Panc1 (cell line): ENCODE measurements at regions of chrX and their contacts with region 1.

Region 1: DNA sequence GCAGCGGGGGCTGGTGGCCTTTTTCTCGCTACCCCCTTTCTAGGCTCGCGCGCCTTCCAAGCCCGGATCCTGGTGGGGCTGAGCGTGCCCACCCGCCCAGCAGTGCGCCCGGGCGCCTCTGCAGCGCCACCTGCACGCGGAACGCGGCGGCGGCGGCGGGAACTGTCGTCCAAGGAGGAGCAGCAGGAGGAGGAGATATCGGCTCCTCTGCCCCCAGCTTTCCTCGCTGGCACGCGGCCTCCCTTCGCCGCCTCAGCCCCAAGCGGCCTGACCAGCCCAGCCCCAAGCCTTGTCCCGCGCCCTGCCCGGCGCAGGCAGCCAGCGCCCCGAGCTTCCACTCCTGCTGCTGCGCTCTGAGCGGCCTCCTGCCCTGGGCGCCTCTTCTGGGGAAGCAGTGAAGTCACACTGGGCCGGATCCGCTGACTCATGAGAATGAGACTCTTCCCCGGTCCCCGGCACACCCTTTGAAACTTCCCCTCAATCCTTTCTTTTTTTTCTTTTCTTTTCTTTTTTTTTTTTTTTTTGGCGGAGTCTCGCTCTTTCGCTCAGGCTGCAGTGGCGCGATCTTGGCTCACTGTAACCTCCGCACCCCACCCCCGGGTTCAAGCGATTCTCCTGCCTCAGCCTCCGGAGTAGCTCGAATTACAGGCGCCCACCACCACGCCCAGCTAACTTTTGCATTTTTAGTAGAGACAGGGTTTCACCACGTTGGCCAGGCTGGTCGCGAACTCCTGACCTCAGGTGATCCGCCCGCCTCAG is 10.6 kb upstream of the ELF4 start:
- DNase-seq: no peak
- ATAC-seq: peak; percentile 84
- H3K4me3 ChIP-seq: peak overlapping the region; percentile 39 to 51
- H3K27ac ChIP-seq: peak overlapping the region; percentile 90
- H3K4me1 ChIP-seq: peaks cover 42% of the 10 kb centered on the region
- H3K27me3 ChIP-seq: no peaks in the 10 kb centered on the region
- CTCF ChIP-seq: no peak

Region 2: GRCh38 chrX:129998021-129998420 is 122.9 kb before region 1 on chrX:
- CTCF ChIA-PET with region 1: no interaction called
- POLR2A ChIA-PET with region 1: no interaction called
- in situ Hi-C with region 1: no loop called
- intact Hi-C with region 1: no loop called
- DNase-seq: no peak
- ATAC-seq: no peak
- H3K4me3 ChIP-seq: no peak overlapping the region
- H3K27ac ChIP-seq: no peak overlapping the region
- H3K4me1 ChIP-seq: no peaks in the 10 kb centered on the region
- H3K27me3 ChIP-seq: no peaks in the 10 kb centered on the region
- CTCF ChIP-seq: no peak

Region 3: GRCh38 chrX:130019312-130019711 is 101.6 kb before region 1 on chrX:
- CTCF ChIA-PET with region 1: no interaction called
- POLR2A ChIA-PET with region 1: no interaction called
- in situ Hi-C with region 1: no loop called
- intact Hi-C with region 1: no loop called
- DNase-seq: no peak
- ATAC-seq: no peak
- H3K4me3 ChIP-seq: no peak overlapping the region
- H3K27ac ChIP-seq: no peak overlapping the region
- H3K4me1 ChIP-seq: no peaks in the 10 kb centered on the region
- H3K27me3 ChIP-seq: no peaks in the 10 kb centered on the region
- CTCF ChIP-seq: no peak

Region 4: DNA sequence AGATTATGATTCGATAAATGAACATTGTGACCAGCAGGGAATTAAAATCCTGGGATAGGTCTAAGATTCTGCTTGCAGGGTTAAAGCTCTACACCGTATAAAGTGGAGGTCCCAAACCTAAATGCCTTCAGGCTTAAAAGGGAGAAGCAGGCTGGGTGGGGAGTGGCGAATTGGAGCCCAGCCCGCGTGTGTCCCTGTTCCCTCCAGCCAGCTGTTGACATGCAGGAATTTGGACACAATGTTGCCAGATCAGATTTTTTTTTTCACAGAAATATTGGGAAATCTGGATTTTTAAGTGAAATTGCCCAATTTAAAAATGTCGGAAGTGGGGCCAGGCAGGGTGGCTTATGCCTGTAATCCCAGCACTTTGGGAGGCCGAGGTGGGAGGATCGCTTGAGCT is 71.1 kb before region 1 on chrX:
- CTCF ChIA-PET with region 1: no interaction called
- POLR2A ChIA-PET with region 1: no interaction called
- in situ Hi-C with region 1: no loop called
- intact Hi-C with region 1: no loop called
- DNase-seq: no peak
- ATAC-seq: no peak
- H3K4me3 ChIP-seq: no peak overlapping the region
- H3K27ac ChIP-seq: no peak overlapping the region
- H3K4me1 ChIP-seq: no peaks in the 10 kb centered on the region
- H3K27me3 ChIP-seq: no peaks in the 10 kb centered on the region
- CTCF ChIP-seq: no peak

Region 5: GRCh38 chrX:130079824-130080406 is 41.0 kb before region 1 on chrX:
- CTCF ChIA-PET with region 1: interaction called, 7 read pairs
- POLR2A ChIA-PET with region 1: no interaction called
- in situ Hi-C with region 1: no loop called
- intact Hi-C with region 1: loop called (anchors 1 kb)
- DNase-seq: peak; percentile 54
- ATAC-seq: peak; percentile 82
- H3K4me3 ChIP-seq: no peak overlapping the region
- H3K27ac ChIP-seq: no peak overlapping the region
- H3K4me1 ChIP-seq: peaks cover 26% of the 10 kb centered on the region
- H3K27me3 ChIP-seq: no peaks in the 10 kb centered on the region
- CTCF ChIP-seq: no peak

Region 6: GRCh38 chrX:130097507-130098209 is 23.3 kb before region 1 on chrX:
- CTCF ChIA-PET with region 1: interaction called, 3 read pairs
- POLR2A ChIA-PET with region 1: interaction called, 12 read pairs
- in situ Hi-C with region 1: no loop called
- intact Hi-C with region 1: no loop called
- DNase-seq: no peak
- ATAC-seq: peak; percentile 61
- H3K4me3 ChIP-seq: no peak overlapping the region
- H3K27ac ChIP-seq: no peak overlapping the region
- H3K4me1 ChIP-seq: peaks cover 8% of the 10 kb centered on the region
- H3K27me3 ChIP-seq: no peaks in the 10 kb centered on the region
- CTCF ChIP-seq: no peak

Region 7: GRCh38 chrX:130165703-130166502 is 45.0 kb after region 1 on chrX and contains the start of gene AIFM1:
- CTCF ChIA-PET with region 1: no interaction called
- POLR2A ChIA-PET with region 1: interaction called, 15 read pairs
- in situ Hi-C with region 1: no loop called
- intact Hi-C with region 1: no loop called
- DNase-seq: peak; percentile 88
- ATAC-seq: peak; percentile 96
- H3K4me3 ChIP-seq: peak within 1 kb of the TSS; percentile 94
- H3K27ac ChIP-seq: peak within 1 kb of the TSS; percentile 92
- H3K4me1 ChIP-seq: peaks cover 30% of the 10 kb centered on the region
- H3K27me3 ChIP-seq: no peaks in the 10 kb centered on the region
- CTCF ChIP-seq: no peak
- total RNA-seq, gene AIFM1: 96.6 TPM

Region 8: DNA sequence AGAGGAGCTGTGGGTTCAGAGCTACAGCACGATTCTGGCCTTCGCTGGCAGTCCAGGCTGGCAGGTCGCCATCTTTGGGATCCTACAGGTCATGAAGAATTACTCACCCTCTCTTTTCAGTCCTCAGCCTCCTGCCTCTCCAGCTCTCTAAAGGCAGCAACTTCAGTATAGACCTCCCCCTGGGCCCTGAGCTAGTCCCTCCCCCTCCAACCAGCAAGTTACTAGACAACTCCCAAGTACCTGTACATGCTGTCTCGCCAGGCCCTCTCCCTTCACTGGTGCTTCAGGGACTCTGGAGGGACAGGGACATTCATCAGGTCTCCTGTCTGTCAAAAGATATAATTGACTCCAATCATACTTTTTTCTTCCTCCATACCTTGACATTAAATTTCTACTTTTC is 264.6 kb after region 1 on chrX and contains the start of gene GPR119:
- CTCF ChIA-PET with region 1: no interaction called
- POLR2A ChIA-PET with region 1: no interaction called
- in situ Hi-C with region 1: no loop called
- intact Hi-C with region 1: no loop called
- DNase-seq: no peak
- ATAC-seq: no peak
- H3K4me3 ChIP-seq: no peak within 1 kb of the TSS
- H3K27ac ChIP-seq: no peak within 1 kb of the TSS
- H3K4me1 ChIP-seq: no peaks in the 10 kb centered on the region
- H3K27me3 ChIP-seq: no peaks in the 10 kb centered on the region
- CTCF ChIP-seq: no peak
- total RNA-seq, gene GPR119: not detected